Activated CD8-positive, alpha-beta T cell treated with anti-CD3 and anti-CD28 coated beads, Interleukin-2, amount 10 ng/mL, durations not matched to agents 7 days and 5 days (primary cell): ENCODE measurements at regions of chr20 and their contacts with region 1.

Region 1: GRCh38 chr20:24027229-24027628 is 38.6 kb upstream of the GGTLC1 start:
- DNase-seq: peak; percentile 90
- ATAC-seq: peak; percentile 96
- H3K4me3 Mint-ChIP-seq: peak overlapping the region; percentile 36
- H3K27ac Mint-ChIP-seq: peak overlapping the region; percentile 94
- H3K4me1 Mint-ChIP-seq: peaks cover 61% of the 10 kb centered on the region
- H3K27me3 Mint-ChIP-seq: no peaks in the 10 kb centered on the region

Region 2: GRCh38 chr20:23970049-23970448 is 57.2 kb before region 1 on chr20:
- CTCF ChIA-PET with region 1: no interaction called
- POLR2A ChIA-PET with region 1: no interaction called
- DNase-seq: no peak
- ATAC-seq: no peak
- H3K4me3 Mint-ChIP-seq: no peak overlapping the region
- H3K27ac Mint-ChIP-seq: no peak overlapping the region
- H3K4me1 Mint-ChIP-seq: no peaks in the 10 kb centered on the region
- H3K27me3 Mint-ChIP-seq: peaks cover 7% of the 10 kb centered on the region

Region 3: DNA sequence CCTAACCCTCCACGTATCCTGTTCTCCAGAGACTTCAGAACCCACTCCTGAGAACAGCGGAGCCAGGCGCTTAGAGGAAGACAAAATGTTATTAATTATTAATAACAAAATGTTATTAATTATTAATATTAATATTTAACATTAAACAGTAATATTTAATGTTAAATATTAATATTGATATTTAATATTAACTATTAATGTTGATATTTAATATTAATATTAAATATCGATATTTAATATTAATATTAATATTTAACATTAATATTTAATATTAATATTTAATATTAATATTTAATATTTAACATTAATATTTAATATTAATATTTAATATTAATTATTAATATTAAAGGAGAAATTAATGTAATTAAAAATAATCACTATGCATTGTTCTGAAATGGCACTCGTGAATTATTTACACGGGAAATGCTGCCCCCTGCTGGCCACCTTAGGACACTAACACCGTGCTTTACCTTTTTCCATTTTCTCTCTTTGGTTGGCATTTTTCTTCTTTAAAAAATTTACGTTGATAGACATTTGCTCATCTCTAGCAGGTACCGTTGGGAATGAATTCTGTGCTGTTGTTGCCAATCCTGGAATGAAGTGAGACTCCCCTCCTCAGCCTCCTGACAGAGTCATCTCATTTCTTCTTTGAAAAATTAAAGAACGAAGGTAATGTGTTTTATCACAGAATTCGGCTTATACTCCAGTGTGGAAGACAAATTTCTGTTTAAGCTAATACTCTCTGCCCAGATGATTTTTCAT is 31.1 kb before region 1 on chr20:
- CTCF ChIA-PET with region 1: interaction called, 10 read pairs
- POLR2A ChIA-PET with region 1: no interaction called
- DNase-seq: peak; percentile 71
- ATAC-seq: no peak
- H3K4me3 Mint-ChIP-seq: no peak overlapping the region
- H3K27ac Mint-ChIP-seq: no peak overlapping the region
- H3K4me1 Mint-ChIP-seq: no peaks in the 10 kb centered on the region
- H3K27me3 Mint-ChIP-seq: peaks cover 13% of the 10 kb centered on the region